ENCODE measurements at regions of chrX and their contacts with region 1.

Region 1: DNA sequence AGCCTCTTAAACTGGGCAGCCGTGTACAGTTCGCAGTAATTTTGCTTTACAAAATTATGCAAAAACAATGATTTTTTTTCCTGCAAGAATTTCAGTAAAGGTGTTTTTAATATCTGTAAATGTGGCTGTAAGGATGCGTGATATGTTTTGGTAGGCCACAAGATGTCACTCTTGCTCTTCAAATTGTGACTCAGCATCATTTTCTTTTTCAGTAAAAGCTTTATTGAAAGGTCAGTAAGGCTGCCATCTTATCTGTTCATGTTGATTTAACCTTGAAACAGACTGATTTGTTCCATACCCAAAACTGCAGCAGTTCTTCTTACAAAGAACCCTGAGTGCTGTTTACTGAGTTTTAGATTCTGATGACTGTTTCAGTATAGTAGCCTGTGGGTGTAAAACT is 39.9 kb downstream of the TXLNG start:
- DNase-seq: no peak
- H3K4me3 ChIP-seq: no peak overlapping the region
- H3K27ac ChIP-seq: peak overlapping the region in 1 of 2 donors; percentile 61
- H3K4me1 ChIP-seq: peaks cover 0 to 3% of the 10 kb centered on the region in 2 donors
- H3K27me3 ChIP-seq: no peaks in the 10 kb centered on the region
- CTCF ChIP-seq: peak; percentile 24 to 59 (median 33)

Region 2: DNA sequence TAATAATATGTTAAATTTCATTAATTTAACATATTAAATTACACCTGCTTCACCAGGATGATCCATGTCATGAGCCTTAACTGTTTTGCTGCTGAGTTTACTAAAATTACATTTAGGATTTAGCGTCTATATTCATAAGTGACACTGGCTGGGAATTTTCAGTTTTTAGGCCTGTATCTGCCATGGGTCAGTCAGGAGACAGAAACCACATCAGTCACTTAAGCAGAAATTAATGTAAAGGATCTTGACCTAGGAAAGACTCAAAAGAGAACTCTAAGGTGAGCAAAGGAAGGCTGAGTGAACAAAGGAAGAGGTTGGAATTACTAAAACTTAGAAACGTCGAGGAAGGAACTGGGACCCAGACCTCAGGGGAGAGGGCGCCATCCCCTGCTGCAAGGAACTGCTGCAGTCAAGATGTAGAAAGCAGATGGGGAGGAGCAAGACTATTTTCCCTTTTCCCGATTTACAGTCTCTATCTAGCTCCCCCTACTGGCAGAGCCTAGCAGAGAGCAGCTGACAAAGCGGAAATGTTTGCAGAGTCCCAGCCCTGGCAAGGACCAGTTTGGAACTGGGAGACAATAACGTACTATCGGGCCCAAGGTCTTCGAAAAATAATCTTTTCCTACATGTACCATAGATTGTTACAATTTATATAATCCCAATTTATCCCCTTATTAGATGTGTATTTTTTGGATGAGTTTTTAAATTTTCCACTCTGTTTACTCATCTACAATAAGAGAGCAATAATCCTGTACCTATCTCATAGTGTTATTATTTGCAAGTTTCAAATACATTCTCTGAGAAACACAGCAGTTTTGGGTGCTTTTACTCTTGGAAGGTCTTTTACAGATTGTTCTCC is 66.5 kb after region 1 on chrX:
- intact Hi-C with region 1: loop called (anchors 1 kb)
- DNase-seq: peak in 1 of 2 donors; percentile 87
- H3K4me3 ChIP-seq: peak overlapping the region in 1 of 2 donors; percentile 4
- H3K27ac ChIP-seq: no peak overlapping the region
- H3K4me1 ChIP-seq: no peaks in the 10 kb centered on the region
- H3K27me3 ChIP-seq: no peaks in the 10 kb centered on the region
- CTCF ChIP-seq: peak; percentile 40 to 82 (median 82)

Region 3: GRCh38 chrX:17032351-17032750 is 206.1 kb after region 1 on chrX:
- intact Hi-C with region 1: loop called (anchors 5 kb)
- DNase-seq: peak; percentile 13 to 88
- H3K4me3 ChIP-seq: no peak overlapping the region
- H3K27ac ChIP-seq: peak overlapping the region; percentile 83 to 85
- H3K4me1 ChIP-seq: peaks cover 0 to 9% of the 10 kb centered on the region in 2 donors
- H3K27me3 ChIP-seq: no peaks in the 10 kb centered on the region
- CTCF ChIP-seq: no peak

Region 4: GRCh38 chrX:17046478-17047097 is 220.4 kb after region 1 on chrX:
- intact Hi-C with region 1: loop called (anchors 5 kb)
- DNase-seq: peak in 1 of 2 donors; percentile 84
- H3K4me3 ChIP-seq: no peak overlapping the region
- H3K27ac ChIP-seq: no peak overlapping the region
- H3K4me1 ChIP-seq: no peaks in the 10 kb centered on the region
- H3K27me3 ChIP-seq: no peaks in the 10 kb centered on the region
- CTCF ChIP-seq: peak; percentile 53 to 71 (median 64)

Region 5: DNA sequence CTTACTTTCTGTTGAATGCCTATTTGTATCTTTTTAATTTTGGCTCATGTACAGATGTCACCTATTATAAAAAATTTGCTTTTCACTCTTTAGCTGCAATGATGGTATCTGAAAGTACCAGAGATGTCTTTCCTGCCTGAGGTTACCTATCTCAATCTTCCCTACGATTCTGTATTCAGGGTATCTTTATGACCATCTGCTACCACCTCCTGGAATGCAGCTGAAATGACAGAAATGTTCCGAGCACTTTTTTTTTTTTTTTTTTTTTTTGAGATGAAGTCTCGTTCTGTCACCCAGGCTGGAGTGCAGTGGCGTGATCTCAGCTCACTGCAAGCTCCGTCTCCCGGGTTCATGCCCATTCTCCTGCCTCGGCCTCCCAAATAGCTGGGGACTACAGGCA is 256.6 kb after region 1 on chrX:
- intact Hi-C with region 1: loop called (anchors 5 kb)
- DNase-seq: no peak
- H3K4me3 ChIP-seq: no peak overlapping the region
- H3K27ac ChIP-seq: no peak overlapping the region
- H3K4me1 ChIP-seq: peaks cover 0 to 12% of the 10 kb centered on the region in 2 donors
- H3K27me3 ChIP-seq: no peaks in the 10 kb centered on the region
- CTCF ChIP-seq: peak in 1 of 3 experiments; percentile 13

Region 6: GRCh38 chrX:17242470-17242869 is 416.3 kb after region 1 on chrX:
- intact Hi-C with region 1: loop called (anchors 5 kb)
- DNase-seq: peak in 1 of 2 donors; percentile 68
- H3K4me3 ChIP-seq: no peak overlapping the region
- H3K27ac ChIP-seq: no peak overlapping the region
- H3K4me1 ChIP-seq: no peaks in the 10 kb centered on the region
- H3K27me3 ChIP-seq: no peaks in the 10 kb centered on the region
- CTCF ChIP-seq: peak; percentile 57 to 75 (median 70)